Right cardiac atrium (tissue), 5 donors: ENCODE measurements at regions of chr6 and their contacts with region 1.

Region 1: DNA sequence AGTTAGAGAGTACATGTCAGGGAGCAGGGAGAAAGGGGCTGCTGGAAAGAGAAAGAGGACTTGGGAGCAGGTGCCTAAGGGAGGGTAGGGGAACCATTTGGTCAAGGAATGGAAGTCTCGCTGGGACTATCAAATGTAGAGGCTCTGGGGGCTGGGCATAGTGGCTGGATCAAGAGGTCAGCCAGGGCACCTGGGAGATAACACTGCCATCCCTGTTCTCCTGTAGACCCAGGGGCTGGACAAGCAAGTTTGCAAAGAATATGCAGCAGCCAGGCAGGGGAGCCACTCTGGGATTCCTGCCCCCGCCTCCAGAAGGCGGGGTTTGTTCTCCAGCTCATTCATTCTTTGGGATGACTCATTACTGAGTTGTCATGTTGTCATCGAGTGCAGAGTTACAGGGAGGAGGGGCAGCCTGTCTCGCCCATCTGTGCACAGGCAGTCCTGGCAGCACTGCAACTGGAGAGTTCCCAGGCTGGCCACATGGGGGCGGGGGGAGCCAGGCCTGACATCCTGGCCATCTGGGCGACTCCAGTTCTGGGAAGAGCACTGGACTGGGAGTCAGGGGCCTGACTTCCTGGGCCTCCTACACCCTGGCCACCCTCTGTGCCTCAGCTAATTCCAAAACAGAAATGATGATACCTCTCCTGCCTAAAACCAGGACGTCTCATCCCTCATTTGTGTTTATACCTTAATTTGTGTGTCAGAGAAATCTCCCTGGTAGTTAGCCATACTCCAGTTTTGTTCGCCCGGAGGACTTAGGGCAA is 28.2 kb upstream of the ZFAND3 start:
- DNase-seq: peak; percentile 93 to 96 (median 96)
- ATAC-seq: peak; percentile 98 to 99
- H3K4me3 ChIP-seq: no peak overlapping the region
- H3K27ac ChIP-seq: no peak overlapping the region
- H3K4me1 ChIP-seq: no peaks in the 10 kb centered on the region
- H3K27me3 ChIP-seq: no peaks in the 10 kb centered on the region

Region 2: GRCh38 chr6:36752187-36752885 is 1039.0 kb before region 1 on chr6:
- intact Hi-C with region 1: no loop called
- DNase-seq: peak in 1 of 3 donors; percentile 35
- ATAC-seq: no peak
- H3K4me3 ChIP-seq: no peak overlapping the region
- H3K27ac ChIP-seq: no peak overlapping the region
- H3K4me1 ChIP-seq: peaks cover 2% of the 10 kb centered on the region
- H3K27me3 ChIP-seq: no peaks in the 10 kb centered on the region

Region 3: DNA sequence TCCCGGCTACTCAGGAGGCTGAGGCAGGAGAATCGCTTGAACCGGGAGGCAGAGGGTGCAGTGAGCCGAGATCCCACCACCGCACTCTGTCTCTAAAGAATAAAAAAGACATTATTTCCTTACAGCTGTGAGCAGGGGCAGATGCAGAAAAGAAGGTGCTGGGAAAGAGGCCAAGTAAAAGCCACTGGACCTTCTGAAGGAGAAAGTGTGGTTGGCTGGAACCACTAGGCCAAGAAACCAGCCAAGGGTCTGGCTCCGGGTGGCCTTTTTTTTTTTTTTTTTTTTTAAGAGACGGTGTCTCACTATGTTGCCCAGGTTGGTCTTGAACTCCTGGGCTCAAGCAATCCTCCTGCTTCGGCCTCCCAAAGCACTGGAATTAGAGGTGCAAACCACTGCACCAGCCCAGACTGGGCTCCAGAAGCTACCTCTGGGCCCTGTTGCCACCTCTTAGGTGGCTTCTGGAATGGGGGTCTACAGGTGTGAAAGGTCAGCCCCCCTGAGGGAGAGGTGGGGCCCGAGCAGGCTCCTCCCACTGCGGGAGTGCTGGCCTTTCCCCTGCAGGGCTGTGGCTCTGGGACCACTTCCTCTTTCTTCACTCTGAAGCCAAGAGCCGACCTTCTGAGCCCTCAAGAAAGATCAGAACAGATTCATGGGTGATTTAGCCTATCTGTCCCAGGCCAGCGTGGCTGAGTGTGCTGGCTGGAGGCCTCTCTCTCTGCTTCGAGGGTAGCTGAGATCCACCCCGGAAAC is 786.1 kb before region 1 on chr6 and contains the start of gene FGD2:
- intact Hi-C with region 1: no loop called
- DNase-seq: no peak
- ATAC-seq: peak; percentile 8 to 9
- H3K4me3 ChIP-seq: peak within 1 kb of the TSS; percentile 6
- H3K27ac ChIP-seq: no peak within 1 kb of the TSS
- H3K4me1 ChIP-seq: no peaks in the 10 kb centered on the region
- H3K27me3 ChIP-seq: no peaks in the 10 kb centered on the region
- total RNA-seq, gene FGD2: 6.4 to 14.0 (median 10.7) TPM

Region 4: DNA sequence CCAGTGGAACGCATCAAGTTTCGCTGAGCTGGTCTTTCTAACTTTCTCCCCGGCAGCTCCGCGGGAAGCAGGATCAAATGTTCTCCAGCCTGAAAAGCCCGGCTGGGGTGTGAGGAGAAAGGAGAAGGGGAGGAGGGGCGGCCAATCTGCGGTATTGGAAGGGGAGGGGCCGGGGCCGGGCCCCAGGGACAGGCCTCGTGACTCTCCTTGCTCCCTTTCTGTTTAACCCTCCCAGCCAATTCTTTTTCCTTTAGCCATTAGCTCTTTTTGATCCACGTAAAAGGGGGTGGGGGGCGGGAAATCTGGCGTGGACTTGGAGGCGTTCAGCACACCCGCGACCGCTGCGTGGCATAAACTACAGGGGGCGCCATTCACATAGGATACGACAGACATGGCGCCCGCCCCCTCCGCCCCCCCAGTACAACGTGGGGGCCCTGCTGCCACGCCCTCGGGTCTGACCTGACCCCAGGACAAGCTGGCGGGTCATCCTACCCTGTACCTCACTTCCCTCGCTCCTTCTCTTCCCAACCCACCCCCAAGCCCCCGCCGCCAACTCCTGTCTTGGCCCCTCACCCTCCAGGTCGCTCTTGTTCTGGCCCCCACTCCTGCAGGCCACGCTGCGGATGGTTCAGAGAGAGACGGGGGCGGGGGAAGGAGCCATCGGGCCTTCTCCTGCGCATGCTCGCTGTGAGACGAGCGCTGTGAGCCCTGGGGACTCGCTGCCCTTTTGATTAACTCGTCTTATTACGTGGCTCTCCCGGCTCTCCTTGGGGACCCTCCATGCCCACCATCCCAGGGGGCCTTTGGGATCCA is 85.9 kb before region 1 on chr6:
- intact Hi-C with region 1: no loop called
- DNase-seq: peak; percentile 87 to 94 (median 91)
- ATAC-seq: peak; percentile 92 to 94
- H3K4me3 ChIP-seq: peak overlapping the region; percentile 53
- H3K27ac ChIP-seq: peak overlapping the region; percentile 71
- H3K4me1 ChIP-seq: no peaks in the 10 kb centered on the region
- H3K27me3 ChIP-seq: no peaks in the 10 kb centered on the region

Region 5: DNA sequence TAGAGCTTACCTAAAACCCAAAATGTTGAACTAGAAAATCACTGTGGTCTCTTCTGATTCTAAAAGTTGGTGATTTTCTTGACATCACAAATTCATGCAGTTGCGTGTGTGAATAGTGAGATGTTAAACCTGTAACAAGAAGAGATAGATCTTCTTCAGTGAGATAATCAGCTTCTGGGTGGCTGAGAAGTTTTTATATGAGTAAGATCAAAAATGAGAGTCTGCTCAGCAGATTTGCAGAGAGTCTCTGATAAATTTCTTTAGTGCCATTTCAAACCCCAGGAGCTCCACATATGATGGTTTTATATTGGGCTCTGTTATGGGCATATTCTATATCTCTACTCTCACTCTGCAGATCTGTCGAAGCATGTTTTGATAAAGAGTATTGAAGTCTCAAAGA is 213.6 kb after region 1 on chr6:
- intact Hi-C with region 1: loop called in 2 of 4 experiments (anchors 5 to 10 kb)
- DNase-seq: no peak
- ATAC-seq: no peak
- H3K4me3 ChIP-seq: no peak overlapping the region
- H3K27ac ChIP-seq: no peak overlapping the region
- H3K4me1 ChIP-seq: peaks cover 2% of the 10 kb centered on the region
- H3K27me3 ChIP-seq: no peaks in the 10 kb centered on the region

Region 6: DNA sequence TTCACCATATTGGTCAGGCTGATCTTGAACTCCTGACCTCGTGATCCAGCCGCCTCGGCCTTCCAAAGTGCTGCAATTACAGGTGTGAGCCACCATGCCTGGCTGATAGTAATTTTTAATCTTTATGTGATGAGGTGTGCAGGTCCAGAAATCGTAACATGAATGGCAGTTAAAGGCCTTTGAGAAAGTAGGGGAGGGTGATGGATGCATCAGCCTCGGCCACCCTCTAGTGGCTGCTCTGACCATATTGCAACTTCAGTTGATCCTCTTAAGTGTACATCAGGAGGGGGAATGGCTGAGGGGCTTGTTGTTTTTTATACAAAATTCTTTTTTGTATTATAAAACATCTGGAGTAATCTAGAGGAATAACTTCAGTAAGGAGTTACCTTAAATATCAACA is 221.2 kb after region 1 on chr6:
- intact Hi-C with region 1: loop called in 2 of 4 experiments (anchors 5 to 10 kb)
- DNase-seq: peak in 1 of 3 donors; percentile 43
- ATAC-seq: peak; percentile 59 to 74
- H3K4me3 ChIP-seq: no peak overlapping the region
- H3K27ac ChIP-seq: no peak overlapping the region
- H3K4me1 ChIP-seq: peaks cover 5% of the 10 kb centered on the region
- H3K27me3 ChIP-seq: no peaks in the 10 kb centered on the region